ENCODE measurements at regions of chr6 and their contacts with region 1.

Region 1: DNA sequence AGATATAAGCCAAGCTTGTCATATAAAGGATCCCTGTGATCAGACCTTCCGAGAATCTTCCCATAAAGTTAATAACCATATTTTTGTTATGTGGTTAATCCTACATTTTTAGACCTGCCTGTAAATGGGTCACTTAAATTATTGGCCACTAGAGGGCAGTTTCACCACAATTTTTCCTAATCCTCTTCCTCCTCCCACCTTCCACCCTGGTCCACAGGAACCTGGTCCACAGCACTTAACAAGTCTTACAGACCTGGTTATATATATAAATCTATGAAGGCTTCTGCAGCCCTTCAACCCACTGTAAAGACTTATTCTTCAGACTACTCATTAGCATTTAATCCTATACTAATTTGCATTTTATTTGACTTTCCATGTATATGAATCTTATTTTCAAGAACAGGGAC is 28.3 kb downstream of the MRS2 start:
- DNase-seq: peak; percentile 65
- H3K4me3 ChIP-seq: no peak overlapping the region
- H3K27ac ChIP-seq: no peak overlapping the region
- H3K4me1 ChIP-seq: peaks cover 14% of the 10 kb centered on the region
- H3K27me3 ChIP-seq: no peaks in the 10 kb centered on the region

Region 2: DNA sequence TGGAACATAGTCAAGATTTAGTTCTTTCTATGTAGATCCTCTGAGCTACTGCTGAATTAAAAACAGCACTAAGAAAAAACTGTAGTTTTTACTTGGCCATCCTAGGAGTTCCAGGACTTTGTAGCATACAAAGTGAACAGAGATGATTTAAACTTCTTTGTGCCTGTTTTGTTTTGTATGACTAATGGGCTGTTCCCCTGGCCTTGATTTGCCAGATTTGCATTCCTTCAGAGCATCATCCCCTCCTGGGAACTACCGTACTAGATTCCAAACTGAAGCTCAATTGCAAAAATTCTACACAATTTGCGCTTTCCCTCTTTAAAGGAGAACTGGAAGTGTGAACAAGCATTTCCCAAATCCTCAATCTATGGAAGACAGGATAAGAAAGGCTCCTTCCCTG is 258.9 kb after region 1 on chr6:
- in situ Hi-C with region 1: loop called (anchors 10 kb)
- DNase-seq: peak; percentile 55
- H3K4me3 ChIP-seq: no peak overlapping the region
- H3K27ac ChIP-seq: no peak overlapping the region
- H3K4me1 ChIP-seq: 0 out of 2 replicates have a peak, but pooled peaks cover 6% of the 10 kb centered on the region
- H3K27me3 ChIP-seq: no peaks in the 10 kb centered on the region

Measured in GM23248 (cell line).